ENCODE measurements at regions of chr5 and their contacts with region 1.

Region 1: DNA sequence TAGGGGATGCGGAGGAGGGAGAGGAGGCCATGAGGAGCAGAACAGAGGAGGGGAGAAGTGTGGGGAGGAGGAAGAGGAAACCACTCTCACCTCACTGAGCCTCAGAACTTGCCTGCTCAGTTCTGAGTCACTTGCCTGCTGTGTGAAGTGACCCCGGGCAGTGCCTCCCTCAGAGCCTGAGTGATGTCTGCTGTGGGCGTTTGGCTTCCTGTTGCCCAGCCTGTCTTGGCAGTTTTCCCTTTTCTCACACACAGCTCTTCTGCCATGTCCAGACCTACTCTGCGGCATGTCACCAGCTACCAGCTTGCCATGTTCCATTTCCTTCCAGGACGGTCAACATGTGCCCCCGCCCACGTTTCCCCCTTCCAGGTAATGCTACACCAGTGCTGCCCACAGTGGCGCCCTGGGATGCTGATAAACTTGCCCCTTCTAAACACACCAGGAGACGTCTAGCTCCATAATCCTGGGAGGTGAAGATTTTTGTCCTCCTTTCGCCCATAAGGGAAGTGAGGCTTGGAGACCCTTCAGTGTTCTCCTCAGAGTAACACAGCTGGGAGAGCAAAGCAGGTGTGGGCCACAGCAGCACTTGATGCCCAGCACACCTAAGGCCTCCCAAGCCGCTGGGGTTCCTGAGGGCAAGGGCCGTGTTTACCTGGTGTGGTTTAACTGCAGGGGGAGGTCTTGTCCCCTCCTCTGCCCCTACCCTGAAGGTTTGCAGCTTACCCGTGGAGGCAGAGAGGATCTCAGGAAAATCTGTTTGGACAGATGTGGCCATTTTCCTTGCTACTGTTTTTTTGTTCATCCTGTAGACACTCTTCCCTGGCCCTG is 63.8 kb upstream of the RNF130 start:
- DNase-seq: peak; percentile 90
- H3K4me3 ChIP-seq: no peak overlapping the region
- H3K27ac ChIP-seq: no peak overlapping the region
- H3K4me1 ChIP-seq: peaks cover 7% of the 10 kb centered on the region
- H3K27me3 ChIP-seq: no peaks in the 10 kb centered on the region
- CTCF ChIP-seq: no peak

Region 2: DNA sequence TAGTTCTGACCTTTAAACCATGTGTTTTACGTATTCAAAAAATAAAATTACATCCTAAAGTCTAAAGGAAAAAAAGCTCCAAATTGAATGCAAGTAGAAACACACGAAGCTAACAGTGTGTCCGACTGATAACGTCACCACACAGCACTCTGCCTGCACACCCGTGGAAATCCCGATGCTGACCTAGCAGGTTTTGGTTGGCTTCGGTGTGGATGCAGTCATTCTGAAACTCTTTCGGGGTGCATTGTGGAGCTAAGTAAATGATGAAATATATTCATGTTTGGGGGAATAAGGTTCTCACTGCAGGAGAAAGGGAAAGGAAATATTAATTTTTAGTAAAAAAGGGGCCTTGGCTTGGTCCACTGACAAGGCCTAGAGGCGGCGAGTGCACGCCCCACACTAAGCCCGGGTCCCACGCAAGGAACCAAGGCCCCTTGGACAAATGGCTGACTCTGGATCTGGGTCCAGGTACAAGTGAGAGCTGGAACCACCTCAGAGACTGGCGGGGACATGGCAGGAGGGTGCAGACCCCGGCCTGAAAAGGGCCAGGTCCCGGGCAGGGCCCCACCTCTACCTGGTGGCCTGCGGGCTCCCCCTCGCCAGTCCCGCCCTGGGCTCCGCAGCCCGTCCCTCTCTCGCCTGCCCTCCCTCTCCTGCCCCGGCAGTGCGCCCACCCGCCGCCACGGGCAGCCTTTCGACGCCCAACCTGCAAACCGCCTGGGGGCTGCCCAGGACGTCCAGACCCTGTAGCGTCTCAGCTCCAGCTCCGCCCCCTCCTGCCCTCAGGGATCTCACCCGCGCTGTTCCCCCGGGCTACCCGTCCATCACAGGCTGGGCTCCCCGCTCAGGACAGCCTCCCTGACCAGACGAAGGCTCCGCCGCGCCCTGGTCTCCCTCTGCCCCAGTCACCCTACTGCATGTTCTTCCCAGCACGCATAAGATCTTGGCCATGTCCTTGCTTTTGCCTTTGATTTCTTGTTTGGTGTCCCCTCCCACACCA is 72.0 kb after region 1 on chr5:
- CTCF ChIA-PET with region 1: no interaction called
- dilution Hi-C with region 1: no loop called
- in situ Hi-C with region 1: no loop called
- intact Hi-C with region 1: loop called (anchors 2 kb)
- DNase-seq: no peak
- H3K4me3 ChIP-seq: no peak overlapping the region
- H3K27ac ChIP-seq: no peak overlapping the region
- H3K4me1 ChIP-seq: peaks cover 4% of the 10 kb centered on the region
- H3K27me3 ChIP-seq: peaks cover 13% of the 10 kb centered on the region
- CTCF ChIP-seq: no peak

Region 3: DNA sequence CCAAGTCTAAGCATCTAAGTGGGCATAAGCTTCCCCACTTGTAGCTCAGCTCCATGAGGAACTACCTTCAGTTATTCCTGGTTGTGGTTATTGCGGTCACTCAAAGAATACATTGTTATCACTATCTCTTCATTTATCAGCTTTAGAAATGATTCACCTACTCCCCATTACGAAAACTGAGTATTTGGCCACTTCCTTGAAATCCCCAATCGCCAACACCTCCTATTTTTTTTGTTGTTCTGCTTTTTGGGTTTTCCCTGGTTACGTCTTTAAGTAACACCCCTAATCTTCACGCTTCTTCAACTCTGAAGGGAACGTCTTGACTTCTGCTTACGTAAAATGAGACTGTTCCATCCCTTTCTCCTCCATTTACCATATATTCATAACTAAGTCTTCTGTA is 135.9 kb after region 1 on chr5:
- CTCF ChIA-PET with region 1: no interaction called
- dilution Hi-C with region 1: no loop called
- in situ Hi-C with region 1: no loop called
- intact Hi-C with region 1: no loop called
- DNase-seq: no peak
- H3K4me3 ChIP-seq: no peak overlapping the region
- H3K27ac ChIP-seq: no peak overlapping the region
- H3K4me1 ChIP-seq: no peaks in the 10 kb centered on the region
- H3K27me3 ChIP-seq: no peaks in the 10 kb centered on the region
- CTCF ChIP-seq: no peak

Measured in mammary epithelial cell (primary cell).